Activated CD4-positive, alpha-beta memory T cell treated with anti-CD3 and anti-CD28 coated beads for 36 hours (primary cell): ENCODE measurements at regions of chr2 and their contacts with region 1.

Region 1: GRCh38 chr2:152036611-152037469 is 62.0 kb downstream of the CACNB4 start:
- DNase-seq: peak; percentile 69
- H3K4me3 Mint-ChIP-seq: no peak overlapping the region
- H3K27ac Mint-ChIP-seq: no peak overlapping the region
- H3K4me1 Mint-ChIP-seq: no peaks in the 10 kb centered on the region
- H3K27me3 Mint-ChIP-seq: no peaks in the 10 kb centered on the region

Region 2: GRCh38 chr2:151840216-151841046 is 196.4 kb before region 1 on chr2:
- CTCF ChIA-PET with region 1: no interaction called
- POLR2A ChIA-PET with region 1: no interaction called
- intact Hi-C with region 1: no loop called
- DNase-seq: no peak
- H3K4me3 Mint-ChIP-seq: no peak overlapping the region
- H3K27ac Mint-ChIP-seq: no peak overlapping the region
- H3K4me1 Mint-ChIP-seq: no peaks in the 10 kb centered on the region
- H3K27me3 Mint-ChIP-seq: peaks cover 3% of the 10 kb centered on the region

Region 3: DNA sequence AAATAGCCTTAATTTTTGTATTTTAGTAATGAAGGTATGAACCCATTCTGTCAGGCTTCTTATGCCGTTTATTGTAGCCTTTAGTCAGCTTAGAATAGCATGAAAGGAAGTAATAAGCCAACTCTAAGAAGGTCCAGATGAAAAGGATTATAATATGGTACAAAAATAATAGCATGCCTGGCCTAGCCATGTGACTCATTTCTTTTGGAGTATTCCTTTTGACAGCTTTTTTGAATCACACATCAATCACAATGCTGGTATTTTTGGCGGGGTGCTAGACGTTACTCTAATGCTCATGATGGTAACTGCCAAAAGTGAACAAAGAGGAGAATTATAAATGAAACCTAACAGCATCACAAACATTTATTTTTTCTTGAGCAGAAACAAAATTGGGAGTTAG is 318.1 kb after region 1 on chr2:
- CTCF ChIA-PET with region 1: no interaction called
- POLR2A ChIA-PET with region 1: no interaction called
- intact Hi-C with region 1: no loop called
- DNase-seq: no peak
- H3K4me3 Mint-ChIP-seq: no peak overlapping the region
- H3K27ac Mint-ChIP-seq: no peak overlapping the region
- H3K4me1 Mint-ChIP-seq: no peaks in the 10 kb centered on the region
- H3K27me3 Mint-ChIP-seq: peaks cover 3% of the 10 kb centered on the region

Region 4: DNA sequence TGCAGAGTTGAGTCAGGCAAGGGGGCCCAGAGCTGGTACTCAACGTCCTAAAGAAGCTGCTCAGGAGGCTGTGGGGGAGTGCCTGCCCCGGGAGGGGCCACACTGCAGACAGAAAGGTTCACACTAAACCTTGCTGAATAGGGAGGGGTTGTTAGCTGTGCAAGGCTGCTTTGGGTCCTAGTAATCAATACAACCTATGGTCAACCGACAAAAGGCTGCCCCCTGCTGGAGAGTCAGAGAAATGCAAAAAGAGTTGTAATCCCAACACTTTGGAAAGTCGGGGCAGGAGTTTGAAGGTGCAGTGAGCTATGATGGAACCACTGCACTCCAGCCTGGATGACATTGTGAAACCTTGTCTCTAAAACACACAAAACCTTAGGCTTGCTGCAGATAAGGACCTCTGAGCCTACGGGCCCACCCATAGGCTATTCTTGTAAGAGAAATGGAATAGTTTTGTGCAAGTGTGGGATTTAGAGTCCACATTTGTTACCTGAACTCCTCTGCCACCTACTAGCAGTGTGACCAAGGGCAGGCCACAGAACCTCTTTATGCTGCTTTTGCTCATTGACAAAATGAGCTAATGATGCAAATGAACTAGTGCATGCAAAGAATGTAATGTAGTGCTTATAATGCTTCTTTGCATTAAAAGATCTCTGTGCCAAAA is 598.9 kb after region 1 on chr2:
- CTCF ChIA-PET with region 1: interaction called, 43 read pairs
- POLR2A ChIA-PET with region 1: no interaction called
- intact Hi-C with region 1: loop called (anchors 1 kb)
- DNase-seq: peak; percentile 69
- H3K4me3 Mint-ChIP-seq: no peak overlapping the region
- H3K27ac Mint-ChIP-seq: no peak overlapping the region
- H3K4me1 Mint-ChIP-seq: no peaks in the 10 kb centered on the region
- H3K27me3 Mint-ChIP-seq: peaks cover 7% of the 10 kb centered on the region